Dendritic cell treated with granulocyte-macrophage colony-stimulating factor and Interleukin-4, amounts not matched to agents 40 ng/mL and 50 ng/mL, for 4 days (primary cell): ENCODE measurements at regions of chr1 and their contacts with region 1.

Region 1: GRCh38 chr1:207017615-207018559 is 14.7 kb downstream of the C1orf116 start:
- H3K4me3 Mint-ChIP-seq: no peak overlapping the region
- H3K27ac Mint-ChIP-seq: peak overlapping the region; percentile 65
- H3K4me1 Mint-ChIP-seq: peaks cover 53% of the 10 kb centered on the region
- H3K27me3 Mint-ChIP-seq: peaks cover 9% of the 10 kb centered on the region

Region 2: DNA sequence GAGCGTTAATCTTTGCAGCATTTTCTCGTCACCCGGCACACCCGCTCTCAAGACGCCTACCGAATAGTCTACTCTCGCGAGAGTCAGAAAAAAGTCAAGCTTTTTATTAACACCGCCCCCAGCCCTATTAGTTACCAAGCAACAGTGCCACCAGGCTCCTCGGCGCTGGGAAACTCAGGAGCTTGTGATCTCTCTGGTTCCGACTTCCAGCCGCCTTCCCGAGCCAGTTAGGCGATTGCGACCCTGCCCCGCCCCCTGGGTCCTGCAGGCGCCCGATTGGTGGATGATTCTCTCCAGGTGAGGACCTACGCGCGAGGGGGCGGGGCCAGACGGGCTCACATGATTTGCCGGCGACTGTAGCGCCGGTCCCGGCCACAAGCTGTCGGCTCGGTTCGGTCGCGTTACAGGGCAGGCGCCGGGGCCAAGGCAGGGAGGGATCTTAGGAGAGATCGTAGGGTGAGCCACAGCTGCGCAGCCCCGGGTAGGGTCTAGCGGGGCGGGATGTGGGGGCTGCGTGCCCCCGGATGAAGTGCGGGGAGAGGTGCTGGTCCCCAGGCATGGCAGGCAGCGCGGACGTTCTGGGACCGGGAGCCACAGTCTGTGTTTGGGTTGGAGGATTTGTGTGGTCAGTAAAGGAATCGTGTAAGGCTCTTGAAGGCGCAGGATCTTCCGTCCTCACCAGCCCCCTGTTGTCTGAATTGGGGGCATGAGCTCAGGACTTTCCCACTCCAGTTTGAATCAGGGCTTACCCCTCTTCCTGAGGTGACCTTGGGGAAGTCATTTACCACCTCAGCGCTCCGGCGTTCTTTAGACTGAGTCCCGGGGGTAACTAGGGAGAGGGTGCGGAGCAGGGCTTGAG is 35.3 kb after region 1 on chr1 and contains the start of gene PFKFB2:
- intact Hi-C with region 1: loop called (anchors 5 kb)
- H3K4me3 Mint-ChIP-seq: peak within 1 kb of the TSS; percentile 93
- H3K27ac Mint-ChIP-seq: peak within 1 kb of the TSS; percentile 89
- H3K4me1 Mint-ChIP-seq: peaks cover 30% of the 10 kb centered on the region
- H3K27me3 Mint-ChIP-seq: no peaks in the 10 kb centered on the region